ENCODE measurements at regions of chr20 and their contacts with region 1.

Region 1: GRCh38 chr20:20360464-20360863 is 7.4 kb upstream of the INSM1 start:
- DNase-seq: peak; percentile 49
- ATAC-seq: peak; percentile 83
- H3K4me3 Mint-ChIP-seq: no peak overlapping the region
- H3K27ac Mint-ChIP-seq: no peak overlapping the region
- H3K4me1 Mint-ChIP-seq: peaks cover 24% of the 10 kb centered on the region
- H3K27me3 Mint-ChIP-seq: peaks cover 47% of the 10 kb centered on the region
- CTCF ChIP-seq: peak; percentile 69

Region 2: DNA sequence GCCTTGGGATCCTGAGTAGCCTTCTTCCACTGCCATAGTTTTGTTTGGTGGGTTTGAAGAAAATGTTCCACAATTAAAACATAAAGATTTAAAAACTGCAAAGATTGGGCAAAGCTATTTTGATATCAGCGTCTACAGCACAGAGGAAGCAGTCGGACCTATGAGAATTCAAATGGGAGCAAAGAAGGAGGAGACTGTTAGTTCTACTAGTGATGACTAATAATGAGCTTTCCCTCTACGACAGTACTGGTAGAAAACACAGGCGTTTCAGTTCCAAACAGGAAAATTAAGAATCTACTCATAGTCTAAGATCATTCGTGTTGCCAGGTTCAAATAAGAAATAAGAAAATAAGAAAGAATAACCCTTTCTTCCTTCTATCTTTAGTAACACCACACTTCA is 128.6 kb after region 1 on chr20:
- CTCF ChIA-PET with region 1: no interaction called
- POLR2A ChIA-PET with region 1: no interaction called
- intact Hi-C with region 1: loop called (anchors 10 kb)
- DNase-seq: no peak
- ATAC-seq: no peak
- H3K4me3 Mint-ChIP-seq: peak overlapping the region; percentile 52
- H3K27ac Mint-ChIP-seq: peak overlapping the region; percentile 80
- H3K4me1 Mint-ChIP-seq: peaks cover 49% of the 10 kb centered on the region
- H3K27me3 Mint-ChIP-seq: no peaks in the 10 kb centered on the region
- CTCF ChIP-seq: no peak

Region 3: GRCh38 chr20:20568604-20569205 is 208.2 kb after region 1 on chr20:
- CTCF ChIA-PET with region 1: interaction called, 5 read pairs
- POLR2A ChIA-PET with region 1: no interaction called
- intact Hi-C with region 1: loop called (anchors 5 kb)
- DNase-seq: peak; percentile 55
- ATAC-seq: no peak
- H3K4me3 Mint-ChIP-seq: no peak overlapping the region
- H3K27ac Mint-ChIP-seq: no peak overlapping the region
- H3K4me1 Mint-ChIP-seq: no peaks in the 10 kb centered on the region
- H3K27me3 Mint-ChIP-seq: no peaks in the 10 kb centered on the region
- CTCF ChIP-seq: peak; percentile 77